ENCODE measurements at regions of chr10 and their contacts with region 1.

Region 1: DNA sequence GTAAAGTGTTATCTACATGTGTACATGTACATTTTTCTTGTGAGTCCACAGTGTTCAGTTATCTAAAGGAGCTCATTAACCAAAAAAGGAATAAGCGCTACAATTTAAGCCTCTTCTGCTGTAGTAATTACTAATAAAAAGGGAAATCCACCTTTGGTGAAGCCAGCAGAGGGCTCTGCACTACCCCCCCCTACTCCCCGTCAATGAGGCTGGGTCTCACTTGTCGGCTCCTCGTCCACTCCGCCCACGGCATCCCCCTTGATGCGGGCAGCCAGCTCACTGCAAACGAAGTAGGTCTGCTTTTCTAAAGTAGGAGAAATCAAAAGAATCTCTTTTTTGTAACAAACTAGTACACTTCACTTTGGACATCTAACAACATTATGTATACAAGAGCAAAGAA is 4.7 kb upstream of the WASHC2A start:
- DNase-seq: peak; percentile 13 to 39 (median 22)
- ATAC-seq: peak; percentile 52
- H3K4me3 ChIP-seq: no peak overlapping the region
- H3K27ac ChIP-seq: no peak overlapping the region
- H3K4me1 ChIP-seq: no peaks in the 10 kb centered on the region
- H3K27me3 ChIP-seq: peaks cover 9% of the 10 kb centered on the region in 2 experiments; a peak in 4 of 5 replicates
- CTCF ChIP-seq: peak; percentile 23 to 44 (median 31); a peak in 3 of 6 replicates
- EP300 ChIP-seq: no peak
- POLR2A ChIP-seq: no peak
- RAD21 ChIP-seq: 0 out of 4 replicates have a peak, but pooled peaks of 1 of the 2 experiments have one; percentile 5

Region 2: GRCh38 chr10:49844821-49845597 is 218.1 kb before region 1 on chr10:
- CTCF ChIA-PET with region 1: no interaction called
- POLR2A ChIA-PET with region 1: no interaction called
- in situ Hi-C with region 1: no loop called
- intact Hi-C with region 1: no loop called
- DNase-seq: no peak
- ATAC-seq: no peak
- H3K4me3 ChIP-seq: no peak overlapping the region
- H3K27ac ChIP-seq: no peak overlapping the region
- H3K4me1 ChIP-seq: no peaks in the 10 kb centered on the region
- H3K27me3 ChIP-seq: no peaks in the 10 kb centered on the region
- CTCF ChIP-seq: no peak
- EP300 ChIP-seq: no peak
- POLR2A ChIP-seq: no peak
- RAD21 ChIP-seq: no peak

Region 3: DNA sequence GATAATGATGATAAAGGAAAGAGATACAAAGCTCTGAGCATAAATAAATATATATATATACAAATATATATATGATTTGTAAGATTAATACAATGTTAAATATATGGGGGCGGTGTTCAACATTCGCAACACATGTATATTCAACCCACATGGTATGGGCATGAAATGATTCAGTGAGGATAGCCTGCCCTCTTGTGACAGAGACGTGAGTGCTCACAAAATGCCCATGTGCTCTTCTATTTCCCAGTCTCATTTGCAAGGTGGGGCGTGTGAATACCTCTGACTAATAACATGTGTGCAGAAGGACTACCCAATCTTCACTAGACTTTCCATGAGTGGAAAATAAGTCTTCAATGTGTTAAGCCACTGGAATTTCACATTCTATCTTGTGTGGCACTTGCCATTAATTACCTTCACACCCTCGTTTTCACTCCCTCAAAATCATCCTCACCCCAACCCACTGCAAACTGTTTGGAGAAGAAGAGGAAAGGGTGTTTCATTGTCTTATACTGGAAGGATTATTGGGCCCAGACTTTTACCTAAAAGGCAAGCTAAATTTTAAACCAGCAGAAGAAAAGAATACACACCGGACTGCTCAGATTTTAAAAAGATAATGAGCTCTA is 161.3 kb after region 1 on chr10:
- CTCF ChIA-PET with region 1: no interaction called
- POLR2A ChIA-PET with region 1: no interaction called
- in situ Hi-C with region 1: no loop called
- intact Hi-C with region 1: loop called (anchors 1 kb)
- DNase-seq: peak in 2 of 4 experiments; percentile 66 to 85
- ATAC-seq: peak; percentile 98
- H3K4me3 ChIP-seq: no peak overlapping the region
- H3K27ac ChIP-seq: no peak overlapping the region
- H3K4me1 ChIP-seq: no peaks in the 10 kb centered on the region; a peak in 1 of 5 replicates
- H3K27me3 ChIP-seq: no peaks in the 10 kb centered on the region
- CTCF ChIP-seq: peak; percentile 84 to 95 (median 86)
- EP300 ChIP-seq: no peak
- POLR2A ChIP-seq: no peak
- RAD21 ChIP-seq: peak; percentile 85 to 93